HCT116 (cell line): ENCODE measurements at regions of chr20 and their contacts with region 1.

Region 1: GRCh38 chr20:19995220-19995863 is 21.8 kb upstream of the NAA20 start:
- DNase-seq: peak; percentile 21
- ATAC-seq: peak; percentile 26; the same call in 1 of the 2 replicates
- H3K4me3 ChIP-seq: no peak overlapping the region
- H3K27ac ChIP-seq: no peak overlapping the region
- H3K4me1 ChIP-seq: peaks cover 32 to 44% of the 10 kb centered on the region in 2 experiments
- H3K27me3 ChIP-seq: no peaks in the 10 kb centered on the region; the same call in 1 of the 2 replicates
- CTCF ChIP-seq: peak; percentile 68 to 91 (median 74)
- POLR2A ChIP-seq: no peak
- RAD21 ChIP-seq: peak; percentile 81

Region 2: GRCh38 chr20:19341348-19342053 is 653.8 kb before region 1 on chr20:
- CTCF ChIA-PET with region 1: no interaction called
- POLR2A ChIA-PET with region 1: no interaction called
- RAD21 ChIA-PET with region 1: no interaction called
- intact Hi-C with region 1: no loop called
- DNase-seq: no peak
- ATAC-seq: no peak
- H3K4me3 ChIP-seq: no peak overlapping the region
- H3K27ac ChIP-seq: no peak overlapping the region
- H3K4me1 ChIP-seq: no peaks in the 10 kb centered on the region
- H3K27me3 ChIP-seq: no peaks in the 10 kb centered on the region
- CTCF ChIP-seq: no peak
- POLR2A ChIP-seq: no peak
- RAD21 ChIP-seq: no peak

Region 3: GRCh38 chr20:19692685-19693119 is 302.6 kb before region 1 on chr20:
- CTCF ChIA-PET with region 1: no interaction called
- POLR2A ChIA-PET with region 1: no interaction called
- RAD21 ChIA-PET with region 1: no interaction called
- intact Hi-C with region 1: loop called (anchors 1 kb)
- DNase-seq: peak; percentile 37
- ATAC-seq: peak; percentile 66
- H3K4me3 ChIP-seq: no peak overlapping the region
- H3K27ac ChIP-seq: no peak overlapping the region
- H3K4me1 ChIP-seq: peaks cover 0 to 10% of the 10 kb centered on the region in 2 experiments; a peak in 2 of 4 replicates
- H3K27me3 ChIP-seq: no peaks in the 10 kb centered on the region
- CTCF ChIP-seq: peak; percentile 60 to 86 (median 81); a peak in 5 of 6 replicates
- POLR2A ChIP-seq: no peak
- RAD21 ChIP-seq: peak; percentile 65

Region 4: GRCh38 chr20:20017001-20017843 is 21.9 kb after region 1 on chr20 and contains the start of gene NAA20:
- CTCF ChIA-PET with region 1: interaction called, 14 read pairs
- POLR2A ChIA-PET with region 1: interaction called, 4 read pairs
- RAD21 ChIA-PET with region 1: no interaction called
- intact Hi-C with region 1: no loop called
- DNase-seq: peak; percentile 91
- ATAC-seq: peak; percentile 95
- H3K4me3 ChIP-seq: peak within 1 kb of the TSS; percentile 89 to 98
- H3K27ac ChIP-seq: peak within 1 kb of the TSS; percentile 77
- H3K4me1 ChIP-seq: peaks cover 22 to 30% of the 10 kb centered on the region in 2 experiments
- H3K27me3 ChIP-seq: no peaks in the 10 kb centered on the region
- CTCF ChIP-seq: peak in 2 of 3 experiments; percentile 46 to 68; a peak in 4 of 6 replicates
- POLR2A ChIP-seq: peak; percentile 54
- RAD21 ChIP-seq: peak; percentile 40
- total RNA-seq, gene NAA20: 71.5 TPM